ENCODE measurements at regions of chr4 and their contacts with region 1.

Region 1: DNA sequence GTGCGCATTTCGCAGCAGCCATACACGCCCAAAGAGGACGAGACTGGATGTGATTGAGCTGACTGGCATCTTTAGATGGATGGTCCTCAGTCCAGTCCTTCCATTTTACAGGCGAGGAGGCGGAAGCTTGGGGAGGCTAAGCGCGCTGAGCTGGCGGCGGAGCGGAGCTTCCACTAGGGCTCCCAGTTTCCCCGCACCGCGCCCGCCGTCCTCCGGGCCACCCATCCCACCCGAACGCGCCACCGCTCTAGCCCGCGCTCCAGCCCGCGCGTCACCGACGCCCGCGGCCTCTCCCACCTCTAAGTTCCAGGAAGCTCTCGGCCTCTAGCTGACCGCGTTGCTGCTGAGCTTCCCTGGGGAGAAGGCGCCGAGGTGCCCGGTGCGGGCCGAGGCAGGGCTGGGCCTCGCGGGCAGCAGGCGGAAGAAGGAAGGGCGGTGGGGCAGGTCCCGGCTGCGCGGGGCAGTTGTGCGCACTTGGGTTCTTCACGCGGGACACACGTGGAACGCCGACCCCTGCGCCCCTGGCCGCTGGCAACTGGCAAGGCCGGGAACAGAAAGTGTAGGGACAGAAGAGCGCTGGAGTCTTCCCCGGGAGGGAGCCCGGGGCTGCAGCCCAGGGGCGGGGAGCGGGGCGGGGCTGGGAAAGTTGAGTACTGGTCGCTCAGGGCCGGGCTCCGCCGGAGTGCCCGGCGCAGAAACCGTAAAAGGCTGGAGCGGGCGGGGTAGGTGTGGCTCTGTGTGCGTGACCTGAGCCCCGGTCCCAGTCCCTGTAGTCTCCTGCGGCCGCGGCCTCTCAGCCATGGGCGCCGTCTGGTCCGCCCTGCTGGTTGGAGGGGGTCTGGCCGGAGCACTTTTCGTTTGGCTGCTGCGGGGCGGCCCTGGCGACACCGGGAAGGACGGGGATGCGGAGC is at the start of gene STBD1:
- ATAC-seq: peak; percentile 70 to 89 (median 86)
- H3K4me3 ChIP-seq: peak within 1 kb of the TSS; percentile 45 to 56 (median 48)
- H3K27ac ChIP-seq: peak within 1 kb of the TSS in 1 of 2 donors; percentile 14
- H3K4me1 ChIP-seq: peaks cover 3 to 15% of the 10 kb centered on the region in 2 donors
- total RNA-seq, gene STBD1: 1.4 to 14.1 (median 3.6) TPM

Region 2: GRCh38 chr4:76179398-76180318 is 126.6 kb before region 1 on chr4:
- in situ Hi-C with region 1: loop called in 1 of 9 experiments (anchors 25 kb)
- ATAC-seq: peak; percentile 60 to 98 (median 81)
- H3K4me3 ChIP-seq: no peak overlapping the region
- H3K27ac ChIP-seq: no peak overlapping the region
- H3K4me1 ChIP-seq: no peaks in the 10 kb centered on the region

Region 3: DNA sequence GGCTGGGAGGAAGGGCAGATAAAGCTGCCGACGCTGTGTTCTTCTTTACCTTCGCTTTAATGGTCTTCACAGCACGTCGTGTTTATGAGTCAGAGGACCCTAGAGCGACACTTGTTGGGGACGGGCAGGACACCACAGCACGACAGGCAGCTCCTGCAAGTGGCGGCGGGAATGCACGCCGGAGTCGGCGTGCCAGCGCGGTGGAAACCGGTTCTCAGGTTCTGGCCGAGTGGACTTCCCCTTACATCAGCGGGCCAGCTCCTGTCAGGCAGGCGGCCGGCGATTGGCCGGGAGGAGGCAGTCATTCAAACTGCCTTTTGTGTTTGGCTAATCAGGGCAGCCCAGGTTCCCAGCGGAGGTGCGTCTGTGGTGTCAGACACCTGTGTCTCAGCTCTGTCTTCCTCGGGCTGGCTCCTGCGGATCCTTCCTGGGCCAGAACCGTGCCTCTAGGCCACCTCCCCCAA is 279.7 kb after region 1 on chr4:
- in situ Hi-C with region 1: no loop called
- ATAC-seq: peak in 7 of 8 experiments; percentile 20 to 92 (median 89)
- H3K4me3 ChIP-seq: peak overlapping the region; percentile 13 to 38 (median 14)
- H3K27ac ChIP-seq: peak overlapping the region in 1 of 2 donors; percentile 35
- H3K4me1 ChIP-seq: peaks cover 47 to 51% of the 10 kb centered on the region in 2 donors